Right ventricle myocardium inferior (tissue), 1 donor: ENCODE measurements at regions of chr6 and their contacts with region 1.

Region 1: DNA sequence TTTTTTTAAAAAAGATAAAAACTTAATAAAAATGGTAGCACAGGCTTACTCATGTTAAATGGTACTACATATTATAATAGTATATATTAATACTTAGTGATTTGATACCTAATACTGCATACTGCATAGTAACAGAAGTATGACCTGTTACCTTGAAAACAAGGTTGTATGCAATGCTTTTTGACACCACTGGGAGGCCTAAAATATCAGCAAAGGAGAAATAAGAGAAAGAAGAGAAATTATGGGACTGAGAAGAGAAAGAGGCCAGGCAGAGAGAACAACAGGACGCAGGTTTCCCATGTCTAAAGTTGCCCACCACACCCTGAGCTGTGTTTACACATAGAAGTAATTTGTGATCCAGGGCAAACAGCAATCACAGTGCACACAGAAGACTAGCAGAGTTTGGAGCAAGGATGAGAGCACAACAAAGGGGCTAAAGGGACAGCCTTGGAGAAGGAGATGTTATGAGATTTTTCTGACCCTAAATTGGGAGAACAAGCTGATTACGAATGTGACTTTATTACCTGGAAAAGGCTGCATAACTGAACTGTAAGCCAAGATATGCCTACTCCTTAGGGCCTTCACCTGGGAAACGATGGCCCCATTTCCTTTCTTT is 73.2 kb downstream of the ROS1 start:
- DNase-seq: no peak
- ATAC-seq: no peak

Region 2: DNA sequence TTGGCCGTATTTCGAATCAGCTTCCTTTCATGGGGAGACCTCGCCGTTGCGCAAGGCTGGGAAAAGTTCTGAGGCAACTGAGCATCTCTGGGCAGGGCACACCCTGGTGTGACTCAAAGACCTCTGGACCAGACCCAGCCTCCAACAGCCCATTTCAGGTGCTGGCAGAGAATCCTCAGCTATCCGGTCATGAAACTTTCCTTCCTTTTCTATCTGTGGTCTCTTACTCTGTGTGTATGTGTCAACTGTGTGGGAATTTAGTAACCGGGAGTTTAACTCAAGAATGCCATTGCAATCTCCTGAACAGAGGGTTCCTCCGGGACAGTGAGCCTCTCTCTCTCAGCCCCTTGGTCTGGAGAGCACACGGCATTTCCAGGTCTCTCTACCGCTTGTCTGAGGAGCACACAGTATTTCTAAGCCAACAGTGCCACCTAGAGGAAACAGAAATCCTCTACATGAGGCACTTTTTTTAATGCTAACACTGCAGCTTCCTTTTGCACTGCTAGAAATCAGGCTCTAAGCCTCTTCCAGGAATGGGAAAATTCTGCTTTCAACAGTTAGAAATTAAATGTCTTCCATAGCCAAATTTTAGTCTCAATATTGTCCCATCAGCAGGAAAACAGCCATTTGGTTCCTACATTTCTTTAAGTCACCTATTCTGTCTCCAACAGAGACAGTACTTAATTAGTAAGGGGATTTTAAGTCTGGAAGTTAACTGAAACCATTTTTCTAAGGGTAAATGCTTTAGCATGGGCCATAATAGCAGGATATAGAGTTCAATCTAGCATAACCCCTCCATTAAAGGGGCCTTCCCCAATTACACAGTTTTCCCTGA is 1228.2 kb after region 1 on chr6:
- intact Hi-C with region 1: loop called (anchors 10 kb)
- DNase-seq: no peak
- ATAC-seq: peak; percentile 88